Endothelial cell of umbilical vein (primary cell): ENCODE measurements at regions of chr18 and their contacts with region 1.

Region 1: GRCh38 chr18:48777026-48777743 is 173.6 kb downstream of the SMAD7 start:
- DNase-seq: peak; percentile 46
- H3K4me3 ChIP-seq: no peak overlapping the region
- H3K27ac ChIP-seq: no peak overlapping the region
- H3K4me1 ChIP-seq: peaks cover 22% of the 10 kb centered on the region
- H3K27me3 ChIP-seq: no peaks in the 10 kb centered on the region
- CTCF ChIP-seq: peak; percentile 93 to 95
- POLR2A ChIP-seq: no peak

Region 2: DNA sequence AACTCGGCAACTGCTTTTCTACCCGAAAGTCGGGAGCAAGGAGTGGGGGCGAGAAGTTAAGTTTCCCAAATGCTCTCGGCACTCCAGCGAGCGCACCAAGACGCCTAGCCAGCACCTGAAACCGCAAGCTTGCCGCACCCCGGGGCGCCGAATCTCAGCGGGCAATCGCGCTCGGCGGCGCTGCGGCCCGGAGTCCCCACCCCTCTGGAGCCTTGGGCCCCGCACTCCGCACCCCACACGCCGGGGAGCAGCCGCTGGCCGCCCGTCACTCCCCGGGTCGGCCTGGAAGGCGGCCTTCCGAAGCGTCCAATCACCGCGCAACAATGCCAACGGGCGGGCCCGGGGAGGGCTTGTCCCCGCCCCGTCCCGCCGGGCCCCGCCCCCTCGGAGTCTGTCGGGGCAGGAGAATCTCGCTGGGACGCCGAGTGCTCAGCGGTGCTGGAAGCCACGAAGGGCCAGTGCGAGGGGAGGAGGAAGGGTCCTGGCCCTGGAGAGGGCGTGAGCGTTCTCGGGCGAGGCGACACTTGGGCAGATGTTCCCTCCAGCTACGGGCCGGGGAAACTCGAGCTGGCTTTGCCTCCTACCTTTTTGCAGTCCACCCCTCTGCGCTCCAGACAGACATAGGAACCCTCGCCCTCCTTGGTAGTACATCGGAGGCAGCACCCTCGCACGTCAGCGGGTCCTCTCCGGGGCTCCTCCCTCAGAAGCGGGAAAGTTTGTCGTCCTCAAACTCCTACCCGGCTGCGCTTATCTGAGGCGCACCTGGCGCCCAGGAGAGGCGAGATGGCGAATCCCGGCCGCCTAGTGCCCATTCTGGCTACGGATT is 366.9 kb before region 1 on chr18:
- CTCF ChIA-PET with region 1: no interaction called
- POLR2A ChIA-PET with region 1: no interaction called
- dilution Hi-C with region 1: no loop called
- intact Hi-C with region 1: no loop called
- DNase-seq: peak; percentile 84
- H3K4me3 ChIP-seq: peak overlapping the region; percentile 42 to 52 (median 49)
- H3K27ac ChIP-seq: no peak overlapping the region
- H3K4me1 ChIP-seq: peaks cover 4% of the 10 kb centered on the region
- H3K27me3 ChIP-seq: peaks cover 37 to 55% of the 10 kb centered on the region in 2 experiments
- CTCF ChIP-seq: no peak
- POLR2A ChIP-seq: no peak

Region 3: DNA sequence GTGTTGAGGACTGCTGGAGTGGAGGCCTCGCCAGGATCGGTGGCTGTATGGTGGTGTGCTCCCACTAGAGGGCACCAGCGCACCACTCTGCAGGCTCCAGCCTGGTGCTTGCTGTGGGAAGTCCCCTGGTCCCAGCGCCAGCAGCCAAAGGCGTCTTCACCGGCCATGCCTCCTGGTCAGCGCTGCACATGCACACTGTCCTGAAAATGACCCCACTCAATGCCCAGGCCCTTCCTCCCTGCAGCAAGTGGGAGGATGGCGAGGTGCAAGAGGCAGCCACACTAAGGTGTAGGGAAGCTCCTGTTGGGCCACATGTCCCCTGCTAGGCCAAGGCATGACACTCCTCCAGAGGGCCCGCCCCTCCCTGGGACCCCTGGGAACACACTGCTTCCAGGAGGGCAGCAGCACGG is 101.8 kb before region 1 on chr18:
- CTCF ChIA-PET with region 1: interaction called, 7 read pairs
- POLR2A ChIA-PET with region 1: no interaction called
- dilution Hi-C with region 1: no loop called
- intact Hi-C with region 1: loop called (anchors 1 kb)
- DNase-seq: peak; percentile 82
- H3K4me3 ChIP-seq: no peak overlapping the region
- H3K27ac ChIP-seq: no peak overlapping the region
- H3K4me1 ChIP-seq: peaks cover 6% of the 10 kb centered on the region
- H3K27me3 ChIP-seq: no peaks in the 10 kb centered on the region
- CTCF ChIP-seq: peak; percentile 90 to 96
- POLR2A ChIP-seq: no peak

Region 4: GRCh38 chr18:48790226-48790874 is 13.2 kb after region 1 on chr18:
- CTCF ChIA-PET with region 1: interaction called, 15 read pairs
- POLR2A ChIA-PET with region 1: no interaction called
- dilution Hi-C with region 1: no loop called
- intact Hi-C with region 1: no loop called
- DNase-seq: peak; percentile 98
- H3K4me3 ChIP-seq: no peak overlapping the region
- H3K27ac ChIP-seq: peak overlapping the region; percentile 62
- H3K4me1 ChIP-seq: peaks cover 15% of the 10 kb centered on the region
- H3K27me3 ChIP-seq: no peaks in the 10 kb centered on the region
- CTCF ChIP-seq: no peak
- POLR2A ChIP-seq: no peak

Region 5: GRCh38 chr18:48842259-48843061 is 65.3 kb after region 1 on chr18:
- CTCF ChIA-PET with region 1: interaction called, 7 read pairs
- POLR2A ChIA-PET with region 1: no interaction called
- dilution Hi-C with region 1: no loop called
- intact Hi-C with region 1: loop called (anchors 1 kb)
- DNase-seq: peak; percentile 95
- H3K4me3 ChIP-seq: no peak overlapping the region
- H3K27ac ChIP-seq: peak overlapping the region; percentile 74
- H3K4me1 ChIP-seq: peaks cover 60% of the 10 kb centered on the region
- H3K27me3 ChIP-seq: no peaks in the 10 kb centered on the region
- CTCF ChIP-seq: no peak
- POLR2A ChIP-seq: no peak

Region 6: DNA sequence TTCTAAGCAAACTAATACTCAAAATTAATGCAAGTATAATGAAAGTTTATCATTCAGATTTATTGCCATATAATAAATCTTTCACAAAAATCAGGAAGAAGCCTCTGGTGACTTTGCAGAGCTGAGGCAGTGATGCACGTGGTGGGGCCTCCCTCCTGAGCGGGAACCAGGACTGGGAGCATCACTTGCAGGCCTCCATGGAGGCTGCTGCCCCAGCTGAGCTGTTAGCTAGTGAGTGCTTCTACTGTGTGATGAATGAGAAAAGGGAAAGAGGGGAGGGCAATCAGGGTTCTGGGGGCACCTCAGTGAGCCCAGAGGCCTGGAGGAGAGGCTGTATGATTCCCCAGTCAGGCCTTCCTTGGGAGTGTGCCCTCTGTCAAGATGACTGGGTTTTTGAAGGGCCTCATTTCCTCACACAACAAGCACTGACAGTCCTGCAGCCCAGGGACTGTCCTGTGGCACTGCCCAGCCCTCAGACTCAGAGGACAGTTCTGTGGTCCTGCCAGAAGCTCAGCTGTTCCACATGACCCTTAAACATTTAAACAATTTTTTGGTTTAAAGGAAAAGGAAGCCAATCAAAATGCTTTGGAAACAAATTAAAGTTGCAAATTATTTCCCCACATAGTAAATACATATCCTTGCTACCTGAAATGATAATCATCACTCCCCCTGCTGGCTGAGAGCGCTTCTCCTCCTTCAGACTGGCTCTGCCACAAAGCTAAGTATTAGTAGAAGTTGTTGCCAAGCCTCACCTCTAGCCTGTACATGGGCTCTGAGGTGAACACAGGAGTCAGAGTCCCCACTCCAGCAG is 264.5 kb after region 1 on chr18:
- CTCF ChIA-PET with region 1: interaction called, 32 read pairs
- POLR2A ChIA-PET with region 1: no interaction called
- dilution Hi-C with region 1: no loop called
- intact Hi-C with region 1: loop called (anchors 1 kb)
- DNase-seq: peak; percentile 52
- H3K4me3 ChIP-seq: no peak overlapping the region
- H3K27ac ChIP-seq: no peak overlapping the region
- H3K4me1 ChIP-seq: no peaks in the 10 kb centered on the region
- H3K27me3 ChIP-seq: no peaks in the 10 kb centered on the region
- CTCF ChIP-seq: peak; percentile 45 to 53
- POLR2A ChIP-seq: no peak

Region 7: GRCh38 chr18:49447810-49448745 is 670.9 kb after region 1 on chr18:
- CTCF ChIA-PET with region 1: no interaction called
- POLR2A ChIA-PET with region 1: no interaction called
- dilution Hi-C with region 1: no loop called
- intact Hi-C with region 1: loop called (anchors 5 kb)
- DNase-seq: peak; percentile 53
- H3K4me3 ChIP-seq: no peak overlapping the region
- H3K27ac ChIP-seq: no peak overlapping the region
- H3K4me1 ChIP-seq: no peaks in the 10 kb centered on the region
- H3K27me3 ChIP-seq: no peaks in the 10 kb centered on the region
- CTCF ChIP-seq: peak; percentile 68
- POLR2A ChIP-seq: no peak